ENCODE measurements at regions of chr12 and their contacts with region 1.

Region 1: GRCh38 chr12:11648831-11649702 is at the start of gene ETV6:
- DNase-seq: peak; percentile 86
- ATAC-seq: peak; percentile 31
- H3K4me3 ChIP-seq: peak within 1 kb of the TSS; percentile 85
- H3K27ac ChIP-seq: peak within 1 kb of the TSS; percentile 99
- H3K4me1 ChIP-seq: peaks cover 3% of the 10 kb centered on the region; the same call in 1 of the 2 replicates
- H3K27me3 ChIP-seq: no peaks in the 10 kb centered on the region
- CTCF ChIP-seq: no peak
- EP300 ChIP-seq: peak; percentile 33 to 46; a peak in 3 of 4 replicates
- POLR2A ChIP-seq: peak; percentile 80
- RAD21 ChIP-seq: no peak; the same call in 1 of the 2 replicates
- polyA plus RNA-seq, gene ETV6: 6.6 to 10.4 TPM

Region 2: DNA sequence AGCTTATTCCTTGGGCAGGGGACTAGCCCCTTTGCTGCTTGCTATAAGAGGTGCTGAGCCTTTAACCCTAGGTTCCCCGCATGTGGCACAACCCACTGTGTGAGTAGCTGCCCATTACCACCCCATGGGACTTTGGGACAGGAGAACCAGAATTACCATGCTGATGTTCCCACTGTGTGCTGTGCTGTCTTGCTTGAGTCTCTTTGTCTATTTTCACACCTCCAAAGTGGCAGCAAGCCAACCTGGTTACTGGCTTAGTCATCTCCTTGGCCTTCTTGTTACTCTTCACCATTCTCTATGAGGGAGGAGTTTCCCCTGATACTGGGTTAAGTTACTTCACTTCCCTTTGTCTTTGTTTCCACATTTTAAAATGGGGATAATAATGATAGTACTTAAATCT is 73.0 kb before region 1 on chr12:
- CTCF ChIA-PET with region 1: interaction called, 6 read pairs
- POLR2A ChIA-PET with region 1: interaction called, 3 read pairs
- RAD21 ChIA-PET with region 1: interaction called, 15 read pairs
- SMC1A ChIA-PET with region 1: interaction called, 28 read pairs
- in situ Hi-C with region 1: no loop called
- intact Hi-C with region 1: loop called (anchors 1 kb)
- DNase-seq: peak; percentile 86
- ATAC-seq: peak; percentile 53
- H3K4me3 ChIP-seq: no peak overlapping the region
- H3K27ac ChIP-seq: peak overlapping the region; percentile 89
- H3K4me1 ChIP-seq: peaks cover 43% of the 10 kb centered on the region
- H3K27me3 ChIP-seq: no peaks in the 10 kb centered on the region
- CTCF ChIP-seq: no peak
- EP300 ChIP-seq: no peak
- POLR2A ChIP-seq: no peak
- RAD21 ChIP-seq: no peak

Region 3: GRCh38 chr12:11609045-11609444 is 40.0 kb before region 1 on chr12:
- CTCF ChIA-PET with region 1: no interaction called
- POLR2A ChIA-PET with region 1: no interaction called
- RAD21 ChIA-PET with region 1: no interaction called
- SMC1A ChIA-PET with region 1: no interaction called
- in situ Hi-C with region 1: no loop called
- intact Hi-C with region 1: no loop called
- DNase-seq: no peak
- ATAC-seq: no peak
- H3K4me3 ChIP-seq: no peak overlapping the region
- H3K27ac ChIP-seq: no peak overlapping the region
- H3K4me1 ChIP-seq: no peaks in the 10 kb centered on the region
- H3K27me3 ChIP-seq: no peaks in the 10 kb centered on the region
- CTCF ChIP-seq: no peak
- EP300 ChIP-seq: no peak
- POLR2A ChIP-seq: no peak
- RAD21 ChIP-seq: no peak

Region 4: DNA sequence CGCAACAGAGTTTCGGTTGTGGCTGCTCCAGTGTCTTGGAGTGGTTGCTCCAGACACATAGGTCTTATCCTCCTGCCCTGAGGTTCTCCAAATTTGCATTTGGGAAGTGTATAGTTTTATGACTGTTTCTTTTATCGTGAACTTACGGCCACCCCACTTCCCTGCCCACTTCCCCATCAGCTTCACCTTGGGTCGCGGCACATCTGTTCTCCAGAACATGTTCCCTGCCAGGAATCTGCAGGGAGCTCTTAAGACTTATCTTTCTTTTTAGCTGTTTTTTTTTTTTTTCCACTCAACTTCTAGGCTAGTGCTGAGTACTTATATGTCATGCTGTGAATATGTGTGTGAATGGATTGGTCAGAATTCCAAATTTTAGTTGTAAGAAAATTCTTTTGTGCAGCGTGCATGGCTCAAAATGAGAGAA is 75.8 kb after region 1 on chr12:
- CTCF ChIA-PET with region 1: interaction called, 3 read pairs
- POLR2A ChIA-PET with region 1: interaction called, 12 read pairs
- RAD21 ChIA-PET with region 1: interaction called, 75 read pairs
- SMC1A ChIA-PET with region 1: interaction called, 76 read pairs
- in situ Hi-C with region 1: loop called (anchors 5 kb)
- intact Hi-C with region 1: loop called (anchors 1 kb)
- DNase-seq: no peak
- ATAC-seq: no peak
- H3K4me3 ChIP-seq: peak overlapping the region; percentile 8; the same call in 1 of the 2 replicates
- H3K27ac ChIP-seq: peak overlapping the region; percentile 89
- H3K4me1 ChIP-seq: peaks cover 98% of the 10 kb centered on the region
- H3K27me3 ChIP-seq: no peaks in the 10 kb centered on the region
- CTCF ChIP-seq: no peak
- EP300 ChIP-seq: no peak
- POLR2A ChIP-seq: no peak
- RAD21 ChIP-seq: no peak

Region 5: DNA sequence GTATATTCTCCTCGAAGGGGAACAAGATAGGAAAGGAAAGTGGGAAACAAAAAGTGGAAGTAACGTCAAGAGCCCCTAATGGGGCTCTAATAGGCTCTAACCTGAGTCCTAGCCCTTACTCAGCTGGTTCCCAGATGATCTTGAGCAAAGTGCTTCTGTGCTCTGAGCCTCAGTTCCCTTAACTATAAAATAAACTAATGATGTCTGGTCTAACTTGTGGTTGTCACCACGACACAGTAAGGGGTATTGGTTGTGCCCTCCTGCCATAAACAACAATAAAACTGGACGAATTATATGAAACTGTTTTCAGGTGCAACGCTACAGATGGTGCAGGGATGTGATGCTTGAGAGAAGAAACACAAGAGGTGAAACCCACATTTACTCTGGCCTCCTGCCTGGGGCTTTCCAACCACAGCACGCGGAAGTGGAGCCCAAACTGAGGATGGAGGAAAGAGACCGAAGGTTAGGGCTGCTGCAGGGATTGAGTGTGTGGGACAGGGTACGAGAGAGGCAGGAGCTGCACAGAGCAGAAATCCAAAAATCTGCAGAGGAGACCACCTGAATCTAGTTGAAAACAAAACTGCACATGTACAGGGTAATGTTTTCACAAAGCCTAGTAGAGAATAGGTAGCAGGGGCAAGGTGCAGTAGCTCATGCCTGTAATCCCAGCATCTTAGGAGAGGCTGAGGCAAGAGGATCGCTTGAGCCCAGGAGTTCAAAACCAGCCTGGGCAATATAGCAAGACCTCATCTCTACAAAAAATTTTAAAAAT is 376.0 kb after region 1 on chr12:
- CTCF ChIA-PET with region 1: no interaction called
- POLR2A ChIA-PET with region 1: no interaction called
- RAD21 ChIA-PET with region 1: interaction called, 4 read pairs
- SMC1A ChIA-PET with region 1: no interaction called
- in situ Hi-C with region 1: loop called (anchors 5 kb)
- intact Hi-C with region 1: loop called (anchors 2 kb)
- DNase-seq: peak; percentile 93
- ATAC-seq: peak; percentile 83
- H3K4me3 ChIP-seq: peak overlapping the region; percentile 4
- H3K27ac ChIP-seq: peak overlapping the region; percentile 74
- H3K4me1 ChIP-seq: peaks cover 40% of the 10 kb centered on the region
- H3K27me3 ChIP-seq: no peaks in the 10 kb centered on the region
- CTCF ChIP-seq: no peak
- EP300 ChIP-seq: peak; percentile 92 to 94
- POLR2A ChIP-seq: no peak
- RAD21 ChIP-seq: no peak

Region 6: DNA sequence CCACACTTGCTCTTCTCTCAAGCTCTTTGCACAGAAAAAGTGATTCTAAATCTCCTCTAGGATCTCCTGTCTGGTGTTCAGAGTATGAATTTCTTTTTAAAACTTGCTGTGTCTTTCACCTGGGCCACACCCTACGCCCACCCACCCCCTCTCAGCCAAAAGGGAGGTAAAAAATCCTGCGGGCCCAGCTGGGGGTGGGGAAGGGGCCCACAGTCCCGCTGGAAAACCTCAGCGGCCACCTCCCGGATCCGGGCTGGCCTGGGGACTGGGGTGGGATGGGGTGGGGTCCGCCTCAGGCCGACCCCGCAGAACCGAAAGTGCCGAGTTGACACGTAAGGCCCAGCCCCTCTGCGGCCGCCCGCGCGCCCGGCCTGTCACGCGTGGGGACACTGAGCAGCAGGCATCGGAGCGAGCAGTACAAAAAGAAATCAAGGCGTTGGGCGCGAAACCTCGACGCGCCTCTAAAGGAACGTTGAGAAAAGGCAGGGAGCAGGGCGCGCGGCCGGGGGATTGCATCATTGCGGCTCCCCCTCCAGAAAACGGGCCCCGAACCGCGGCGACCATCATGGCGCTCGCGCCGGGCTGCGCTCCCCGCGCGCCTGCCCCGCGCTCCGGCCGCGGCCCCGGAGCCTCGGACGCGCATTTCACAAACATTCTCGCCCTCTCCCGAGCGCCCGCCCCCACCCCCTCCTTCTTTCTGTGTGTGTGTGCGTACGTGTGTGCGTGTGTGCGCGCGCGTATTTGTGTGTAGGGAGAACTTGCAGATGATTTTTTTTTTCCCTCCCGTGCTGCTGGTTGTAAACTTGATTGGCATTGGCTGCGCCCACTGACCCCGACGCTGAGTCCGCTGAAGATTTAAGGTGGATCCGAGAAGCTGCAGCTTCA is 1075.8 kb after region 1 on chr12:
- CTCF ChIA-PET with region 1: no interaction called
- POLR2A ChIA-PET with region 1: no interaction called
- RAD21 ChIA-PET with region 1: no interaction called
- SMC1A ChIA-PET with region 1: no interaction called
- in situ Hi-C with region 1: no loop called
- intact Hi-C with region 1: loop called (anchors 10 kb)
- DNase-seq: peak; percentile 94
- ATAC-seq: peak; percentile 55
- H3K4me3 ChIP-seq: peak overlapping the region; percentile 97
- H3K27ac ChIP-seq: peak overlapping the region; percentile 97
- H3K4me1 ChIP-seq: peaks cover 14% of the 10 kb centered on the region
- H3K27me3 ChIP-seq: no peaks in the 10 kb centered on the region
- CTCF ChIP-seq: no peak
- EP300 ChIP-seq: no peak
- POLR2A ChIP-seq: peak; percentile 76
- RAD21 ChIP-seq: no peak

Measured in GM12878 (cell line).